Lower leg skin (tissue), 4 donors: ENCODE measurements at regions of chr2 and their contacts with region 1.

Region 1: DNA sequence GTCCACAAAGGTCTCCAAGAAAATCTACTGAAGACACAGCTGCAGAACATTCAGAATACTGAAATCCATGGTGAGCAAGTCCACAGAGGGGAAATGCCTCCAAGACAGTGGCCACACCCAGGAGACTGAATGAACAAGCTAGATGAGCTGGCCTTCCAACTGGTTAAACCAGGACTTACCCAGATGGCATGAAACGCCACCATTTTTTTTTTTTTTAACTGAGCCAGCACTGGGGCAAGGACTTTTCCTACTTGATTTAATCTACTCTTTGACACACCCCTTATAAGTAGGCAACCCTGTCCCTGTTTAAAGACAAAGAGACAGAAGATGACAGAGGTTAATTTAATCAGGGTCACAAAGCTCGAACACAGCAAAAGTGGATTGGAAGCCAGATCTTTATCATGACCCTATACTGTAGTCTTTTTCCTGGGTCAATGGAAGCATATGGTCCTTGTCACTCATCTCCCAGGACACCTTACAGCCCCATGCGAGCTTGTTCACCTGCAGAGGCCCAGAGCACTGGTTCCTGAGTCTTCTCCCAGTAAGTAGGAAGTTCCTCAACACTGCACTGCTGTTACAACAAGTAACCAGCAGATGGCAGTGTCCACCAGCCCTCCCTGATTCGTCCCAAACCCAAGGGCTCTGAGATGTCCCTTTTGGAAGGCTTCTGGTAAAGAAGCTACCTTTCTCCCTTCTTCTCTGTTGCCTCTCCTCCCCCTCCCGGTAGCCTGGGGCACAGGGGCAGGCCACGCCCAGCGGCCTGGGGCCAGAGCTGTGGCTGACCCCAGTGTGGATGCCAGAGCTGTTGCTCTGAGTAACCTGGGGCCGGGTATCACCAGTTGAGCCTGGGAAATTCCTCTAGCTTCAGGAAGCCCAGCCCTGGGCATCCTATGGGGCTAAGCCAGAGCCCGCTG is 5.6 kb upstream of the GDF7 start:
- DNase-seq: peak; percentile 71 to 94
- H3K4me3 ChIP-seq: no peak overlapping the region
- CTCF ChIP-seq: peak in 2 of 3 donors; percentile 56 to 61
- POLR2A ChIP-seq: no peak

Region 2: DNA sequence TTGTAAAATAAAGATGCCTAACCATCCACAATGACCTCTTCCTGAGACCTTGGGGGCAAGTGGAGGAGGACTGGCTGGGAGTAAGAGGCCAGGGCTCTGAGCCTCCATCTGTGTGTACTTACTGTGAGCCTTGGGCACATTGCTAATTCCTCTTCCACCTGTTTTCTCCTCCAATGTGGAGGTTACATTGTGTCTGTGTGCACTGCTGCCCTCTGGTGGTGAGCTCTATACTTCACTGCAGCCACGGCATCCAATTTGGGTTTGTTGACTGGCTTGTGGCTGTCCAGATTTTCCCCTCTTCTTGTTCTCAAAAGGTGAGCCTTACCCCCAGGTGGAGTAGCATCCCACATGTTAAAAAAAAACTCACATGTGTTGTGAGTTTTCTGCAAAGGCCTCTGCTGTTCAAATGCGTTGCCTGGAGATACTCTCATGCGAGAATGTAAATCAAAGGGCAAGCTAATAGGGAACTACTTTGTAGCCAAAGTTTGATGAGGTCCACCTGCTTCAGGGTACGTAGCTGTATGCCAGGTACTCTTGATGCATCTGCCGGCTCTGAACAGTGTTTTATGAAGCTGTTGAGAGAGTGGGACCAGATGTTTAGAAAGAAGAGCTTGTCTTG is 301.7 kb after region 1 on chr2:
- intact Hi-C with region 1: loop called (anchors 2 kb)
- DNase-seq: peak; percentile 64 to 92
- H3K4me3 ChIP-seq: no peak overlapping the region
- CTCF ChIP-seq: peak in 1 of 3 donors; percentile 89
- POLR2A ChIP-seq: no peak

Region 3: GRCh38 chr2:21111012-21111411 is 449.7 kb after region 1 on chr2:
- intact Hi-C with region 1: loop called (anchors 5 kb)
- DNase-seq: no peak
- H3K4me3 ChIP-seq: no peak overlapping the region
- CTCF ChIP-seq: no peak
- POLR2A ChIP-seq: no peak